ENCODE measurements at regions of chr3 and their contacts with region 1.

Region 1: DNA sequence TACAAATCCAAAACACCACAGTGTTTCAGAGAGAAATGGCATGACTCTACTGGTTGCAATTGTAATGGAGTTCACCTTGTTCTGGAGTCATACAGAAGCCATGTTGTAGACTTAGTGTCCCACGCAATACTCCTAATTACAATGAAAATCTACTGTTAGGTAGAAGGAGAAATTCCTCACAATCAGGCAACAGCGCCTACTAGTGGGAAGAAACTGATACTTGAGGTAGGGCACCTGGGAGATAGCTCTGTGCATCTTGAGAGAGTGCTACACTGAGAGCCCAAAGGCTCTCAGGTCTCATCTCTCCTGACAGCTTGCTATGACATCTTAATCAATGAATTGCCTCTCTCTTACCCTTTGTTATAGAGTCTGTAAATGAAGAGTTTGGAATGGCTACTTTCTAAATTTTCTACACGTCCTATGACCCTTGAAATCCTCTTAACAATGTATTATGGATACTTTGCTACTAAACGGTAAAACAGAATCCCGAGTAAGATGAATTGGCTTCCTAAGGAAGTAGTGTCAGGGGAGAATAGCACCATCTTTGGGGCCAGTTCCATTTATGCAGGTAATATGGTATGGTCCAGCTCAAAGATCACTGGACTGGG is 422.7 kb upstream of the TPRG1 start:
- DNase-seq: peak; percentile 66
- H3K4me3 Mint-ChIP-seq: no peak overlapping the region
- H3K27ac Mint-ChIP-seq: no peak overlapping the region
- H3K4me1 Mint-ChIP-seq: peaks cover 29% of the 10 kb centered on the region
- H3K27me3 Mint-ChIP-seq: no peaks in the 10 kb centered on the region

Region 2: DNA sequence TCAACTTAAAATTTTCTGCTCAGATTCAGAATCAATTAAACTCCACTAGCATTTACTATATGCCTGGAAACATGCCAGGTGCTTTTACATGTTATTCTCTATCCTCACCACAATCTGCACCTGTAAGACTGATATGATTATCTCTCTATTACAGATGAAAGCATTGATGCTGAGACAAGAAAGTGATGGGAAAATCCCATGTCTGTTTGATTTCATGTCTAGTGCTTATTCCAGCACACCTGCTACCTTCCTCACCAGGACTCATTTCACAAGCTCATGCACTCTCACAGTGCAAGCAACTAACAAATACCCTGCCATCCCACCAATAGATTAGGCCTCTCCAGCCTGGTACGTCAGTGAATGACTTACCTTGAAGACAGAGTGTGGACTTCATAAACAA is 978.9 kb before region 1 on chr3:
- CTCF ChIA-PET with region 1: no interaction called
- intact Hi-C with region 1: loop called (anchors 1 kb)
- DNase-seq: peak; percentile 73
- H3K4me3 Mint-ChIP-seq: no peak overlapping the region
- H3K27ac Mint-ChIP-seq: peak overlapping the region; percentile 82
- H3K4me1 Mint-ChIP-seq: peaks cover 38% of the 10 kb centered on the region
- H3K27me3 Mint-ChIP-seq: no peaks in the 10 kb centered on the region

Region 3: DNA sequence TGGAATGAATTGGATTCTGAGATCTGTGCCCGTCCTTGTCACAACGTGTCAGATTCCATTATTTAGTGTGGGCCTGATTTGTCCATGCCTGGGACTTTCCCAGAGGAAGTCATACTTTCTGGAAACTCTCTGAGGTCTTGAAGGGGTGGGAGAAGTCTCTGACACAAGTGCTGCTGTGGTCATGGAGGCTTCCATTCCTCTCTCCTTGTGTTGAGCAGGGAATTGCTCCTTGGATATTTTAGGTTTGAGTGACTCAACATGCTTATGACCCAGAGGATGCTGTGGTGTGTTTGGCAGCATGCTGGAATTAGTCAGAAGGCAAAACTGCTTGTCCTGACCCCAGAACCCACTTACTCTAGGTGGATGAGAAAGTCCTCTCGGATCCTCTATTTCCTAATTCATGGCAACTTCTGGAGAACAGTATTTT is 463.0 kb before region 1 on chr3:
- CTCF ChIA-PET with region 1: no interaction called
- intact Hi-C with region 1: loop called (anchors 1 kb)
- DNase-seq: peak; percentile 32
- H3K4me3 Mint-ChIP-seq: no peak overlapping the region
- H3K27ac Mint-ChIP-seq: no peak overlapping the region
- H3K4me1 Mint-ChIP-seq: peaks cover 45% of the 10 kb centered on the region
- H3K27me3 Mint-ChIP-seq: no peaks in the 10 kb centered on the region

Region 4: GRCh38 chr3:188339410-188340295 is 409.5 kb before region 1 on chr3:
- CTCF ChIA-PET with region 1: no interaction called
- intact Hi-C with region 1: loop called (anchors 1 kb)
- DNase-seq: peak; percentile 76
- H3K4me3 Mint-ChIP-seq: peak overlapping the region; percentile 59
- H3K27ac Mint-ChIP-seq: peak overlapping the region; percentile 92
- H3K4me1 Mint-ChIP-seq: peaks cover 34% of the 10 kb centered on the region
- H3K27me3 Mint-ChIP-seq: no peaks in the 10 kb centered on the region

Region 5: GRCh38 chr3:188584162-188584529 is 165.0 kb before region 1 on chr3:
- CTCF ChIA-PET with region 1: no interaction called
- intact Hi-C with region 1: loop called (anchors 1 kb)
- DNase-seq: peak; percentile 61
- H3K4me3 Mint-ChIP-seq: no peak overlapping the region
- H3K27ac Mint-ChIP-seq: no peak overlapping the region
- H3K4me1 Mint-ChIP-seq: peaks cover 15% of the 10 kb centered on the region
- H3K27me3 Mint-ChIP-seq: no peaks in the 10 kb centered on the region

Region 6: GRCh38 chr3:188728371-188728896 is 20.7 kb before region 1 on chr3:
- CTCF ChIA-PET with region 1: no interaction called
- intact Hi-C with region 1: loop called (anchors 1 kb)
- DNase-seq: no peak
- H3K4me3 Mint-ChIP-seq: no peak overlapping the region
- H3K27ac Mint-ChIP-seq: no peak overlapping the region
- H3K4me1 Mint-ChIP-seq: peaks cover 24% of the 10 kb centered on the region
- H3K27me3 Mint-ChIP-seq: no peaks in the 10 kb centered on the region

Region 7: GRCh38 chr3:189041482-189042090 is 292.5 kb after region 1 on chr3:
- CTCF ChIA-PET with region 1: no interaction called
- intact Hi-C with region 1: loop called (anchors 10 kb)
- DNase-seq: peak; percentile 90
- H3K4me3 Mint-ChIP-seq: no peak overlapping the region
- H3K27ac Mint-ChIP-seq: no peak overlapping the region
- H3K4me1 Mint-ChIP-seq: peaks cover 29% of the 10 kb centered on the region
- H3K27me3 Mint-ChIP-seq: peaks cover 3% of the 10 kb centered on the region

Region 8: DNA sequence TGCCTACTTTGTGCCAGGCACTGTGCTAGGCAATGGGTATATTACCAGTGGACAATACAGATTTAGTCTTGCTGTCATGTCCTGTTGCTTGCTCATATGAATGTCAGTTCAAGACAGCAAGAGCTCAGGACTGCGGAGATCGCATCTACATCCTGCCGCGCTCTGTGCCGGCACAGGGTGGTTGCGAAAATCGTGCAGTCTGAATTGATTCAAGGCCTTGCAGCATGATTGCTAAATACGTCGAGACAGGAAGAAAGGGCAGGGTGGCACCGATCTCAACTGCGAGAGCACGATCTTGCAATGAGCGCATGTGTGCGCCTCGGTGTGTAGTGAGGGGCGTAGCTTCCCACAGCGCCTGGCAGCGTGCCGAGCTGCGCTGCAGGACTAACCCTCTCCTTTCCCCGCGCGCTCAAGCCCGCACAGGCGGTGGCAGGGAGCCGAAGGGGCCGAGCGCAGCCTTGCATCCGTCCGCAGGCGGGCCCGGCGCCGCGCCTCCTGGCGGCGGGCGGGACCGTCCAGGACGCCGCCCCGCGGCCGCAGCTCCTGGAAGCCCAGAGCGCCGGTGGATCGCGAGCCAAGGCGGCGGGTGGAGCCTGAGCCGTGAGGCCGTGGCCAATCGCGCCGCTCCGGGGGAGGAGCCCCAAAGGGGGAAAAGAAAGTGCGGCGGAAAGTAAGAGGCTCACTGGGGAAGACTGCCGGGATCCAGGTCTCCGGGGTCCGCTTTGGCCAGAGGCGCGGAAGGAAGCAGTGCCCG is 1764.5 kb after region 1 on chr3 and contains the start of gene IL1RAP:
- CTCF ChIA-PET with region 1: no interaction called
- intact Hi-C with region 1: no loop called
- DNase-seq: peak; percentile 87
- H3K4me3 Mint-ChIP-seq: peak within 1 kb of the TSS; percentile 77
- H3K27ac Mint-ChIP-seq: peak within 1 kb of the TSS; percentile 76
- H3K4me1 Mint-ChIP-seq: peaks cover 30% of the 10 kb centered on the region
- H3K27me3 Mint-ChIP-seq: no peaks in the 10 kb centered on the region
- total RNA-seq, gene IL1RAP: 11.0 to 13.7 TPM

Measured in activated naive CD4-positive, alpha-beta T cell treated with anti-CD3 and anti-CD28 coated beads for 36 hours (primary cell).